ENCODE measurements at regions of chr20 and their contacts with region 1.

Region 1: DNA sequence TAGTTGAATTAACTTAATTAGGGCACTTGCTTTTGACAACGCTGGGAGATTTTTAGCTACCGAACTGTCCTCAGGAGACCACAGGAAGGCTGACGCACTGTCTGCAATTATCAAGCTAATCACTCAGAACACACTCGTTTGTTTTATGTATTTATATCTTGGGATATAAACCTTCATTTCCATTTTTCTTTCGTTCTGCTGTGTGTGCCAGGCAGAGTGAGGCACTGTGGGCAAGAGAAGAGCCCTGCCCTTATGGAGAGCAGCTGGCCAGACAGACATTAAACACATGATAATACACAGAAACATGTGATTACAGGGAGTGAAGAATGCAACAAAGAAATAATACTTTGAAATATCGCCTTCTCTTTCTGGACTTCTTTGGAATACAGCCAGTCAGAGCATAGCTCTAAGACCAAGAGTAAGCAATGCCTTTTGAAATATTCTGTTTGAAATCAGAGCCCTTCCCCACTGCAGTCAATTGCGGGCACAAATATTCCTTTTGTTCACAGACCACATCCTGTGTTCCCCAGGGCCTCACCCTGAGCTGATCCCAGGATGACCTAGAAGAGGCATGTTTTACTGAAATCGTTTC is 96.8 kb downstream of the ANKRD60 start:
- DNase-seq: peak; percentile 98
- ATAC-seq: peak; percentile 49
- H3K4me3 ChIP-seq: peak overlapping the region; percentile 43
- H3K27ac ChIP-seq: peak overlapping the region; percentile 74
- H3K4me1 ChIP-seq: peaks cover 65% of the 10 kb centered on the region
- H3K27me3 ChIP-seq: no peaks in the 10 kb centered on the region
- CTCF ChIP-seq: no peak

Region 2: DNA sequence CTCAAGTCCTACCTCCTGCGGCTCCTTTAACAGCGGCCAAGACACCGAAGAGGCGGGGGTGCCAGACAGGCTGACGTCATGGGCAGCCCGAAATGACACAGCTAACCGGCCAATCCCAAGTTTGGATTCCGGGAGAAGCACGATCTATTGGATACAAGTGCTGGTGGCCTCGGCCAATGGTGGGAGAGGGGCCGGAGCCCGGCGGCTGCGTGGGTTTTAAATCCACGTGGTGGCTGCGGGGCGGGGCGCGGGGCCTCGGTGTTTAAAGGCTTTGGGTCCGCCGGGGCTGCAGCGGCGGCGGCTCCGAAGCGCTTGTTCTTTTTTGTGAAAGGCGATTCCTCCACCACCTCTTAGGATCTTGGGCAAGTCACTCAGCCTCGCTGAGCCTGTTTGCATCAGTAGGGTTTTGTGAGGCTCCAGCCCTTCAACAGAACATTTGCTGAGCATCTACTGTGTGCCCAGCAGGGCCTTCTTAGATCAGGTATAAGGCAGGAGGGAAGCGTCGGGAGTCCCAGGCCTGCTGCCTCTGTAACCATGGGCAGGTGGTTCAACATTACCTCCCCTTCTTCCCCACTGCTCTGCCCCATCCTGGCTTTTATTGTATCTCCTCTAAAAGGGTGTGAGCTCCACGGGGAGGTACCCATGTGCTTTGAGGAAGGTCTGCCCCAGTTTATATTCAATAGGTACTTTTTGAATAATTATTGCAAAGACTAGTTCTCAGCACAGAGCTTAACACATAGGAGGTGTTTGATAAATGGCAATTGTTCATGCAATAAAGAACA is 413.0 kb before region 1 on chr20:
- CTCF ChIA-PET with region 1: no interaction called
- POLR2A ChIA-PET with region 1: interaction called, 13 read pairs
- intact Hi-C with region 1: no loop called
- DNase-seq: peak; percentile 100
- ATAC-seq: peak; percentile 88
- H3K4me3 ChIP-seq: peak overlapping the region; percentile 63
- H3K27ac ChIP-seq: peak overlapping the region; percentile 72
- H3K4me1 ChIP-seq: peaks cover 49% of the 10 kb centered on the region
- H3K27me3 ChIP-seq: no peaks in the 10 kb centered on the region
- CTCF ChIP-seq: no peak

Region 3: DNA sequence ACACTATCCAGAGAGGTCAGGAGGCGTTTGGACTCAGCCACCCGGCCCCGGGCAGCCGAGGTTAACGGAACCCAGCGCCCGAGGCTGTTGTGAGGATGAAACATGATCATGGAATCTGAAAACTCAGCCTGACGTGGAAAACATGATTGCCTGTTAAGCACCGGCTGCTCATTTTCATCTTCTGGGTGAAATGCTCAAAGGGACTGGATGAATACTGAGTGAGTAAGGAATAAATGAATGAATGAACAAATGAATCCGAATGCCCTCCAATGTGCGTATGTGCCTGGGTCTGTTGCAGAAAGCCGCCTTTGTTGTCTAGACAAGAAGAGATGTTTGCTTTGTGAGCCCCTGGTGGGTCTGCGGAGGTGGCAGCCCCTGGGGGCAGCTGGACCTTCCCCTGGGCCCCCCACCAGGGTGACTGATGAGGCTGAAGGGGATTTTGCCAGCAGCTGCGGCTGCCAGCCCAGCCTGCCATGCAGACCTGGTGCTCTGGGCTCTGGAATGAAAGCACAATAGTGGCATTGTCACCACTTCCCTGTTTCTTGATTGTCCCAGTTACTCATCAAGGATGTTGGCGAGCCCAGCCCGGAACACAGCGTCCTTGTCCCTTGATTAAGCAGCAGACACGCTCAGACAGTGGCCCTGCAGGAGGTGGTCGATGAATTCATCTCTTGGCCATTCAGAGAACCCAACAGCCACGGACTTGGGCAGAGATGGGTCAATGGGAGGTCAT is 114.2 kb before region 1 on chr20:
- CTCF ChIA-PET with region 1: no interaction called
- POLR2A ChIA-PET with region 1: no interaction called
- intact Hi-C with region 1: loop called (anchors 5 kb)
- DNase-seq: peak; percentile 98
- ATAC-seq: peak; percentile 88
- H3K4me3 ChIP-seq: peak overlapping the region; percentile 42; the same call in 1 of the 2 replicates
- H3K27ac ChIP-seq: peak overlapping the region; percentile 97
- H3K4me1 ChIP-seq: peaks cover 58% of the 10 kb centered on the region
- H3K27me3 ChIP-seq: no peaks in the 10 kb centered on the region
- CTCF ChIP-seq: no peak

Region 4: DNA sequence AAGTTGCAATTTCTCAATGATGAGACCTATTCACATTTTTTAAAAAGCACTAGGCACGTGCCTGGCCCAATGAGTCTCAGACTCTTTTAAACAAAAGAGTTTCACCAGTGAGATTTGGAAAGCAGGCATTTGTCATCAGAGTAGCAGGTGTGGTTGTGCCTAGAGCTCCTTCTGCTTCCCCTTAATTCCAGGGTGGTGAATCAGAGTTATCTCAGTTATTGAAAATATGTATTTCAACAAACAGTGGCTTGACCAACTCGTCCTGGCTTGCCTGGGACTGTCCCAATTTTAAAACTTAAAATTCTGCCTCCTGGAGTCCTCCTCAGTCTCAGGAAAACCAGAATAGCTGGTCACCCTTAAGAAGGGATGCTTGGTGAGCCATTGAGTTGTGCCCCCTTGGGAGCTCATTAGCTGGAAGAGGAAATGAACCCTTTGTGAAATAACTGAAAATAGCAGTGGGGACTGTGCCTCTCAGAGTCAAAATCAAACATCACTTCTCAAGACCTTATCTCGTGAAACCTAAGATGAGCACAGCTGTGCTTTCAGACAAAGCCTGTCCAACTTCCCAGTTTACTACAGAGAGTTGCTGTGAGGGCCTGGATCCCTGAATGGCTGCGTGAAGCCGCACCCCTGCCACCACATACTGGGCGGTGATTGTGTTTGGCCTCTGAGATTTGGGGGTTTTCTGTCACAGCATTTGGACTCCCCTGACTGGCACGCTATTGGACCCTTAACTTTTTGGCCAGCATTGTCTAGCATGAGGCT is 19.4 kb before region 1 on chr20:
- CTCF ChIA-PET with region 1: no interaction called
- POLR2A ChIA-PET with region 1: interaction called, 7 read pairs
- intact Hi-C with region 1: loop called (anchors 1 kb)
- DNase-seq: peak; percentile 98
- ATAC-seq: peak; percentile 94
- H3K4me3 ChIP-seq: no peak overlapping the region
- H3K27ac ChIP-seq: peak overlapping the region; percentile 55
- H3K4me1 ChIP-seq: peaks cover 44% of the 10 kb centered on the region
- H3K27me3 ChIP-seq: no peaks in the 10 kb centered on the region
- CTCF ChIP-seq: no peak

Region 5: GRCh38 chr20:58179432-58180099 is 47.9 kb after region 1 on chr20:
- CTCF ChIA-PET with region 1: no interaction called
- POLR2A ChIA-PET with region 1: no interaction called
- intact Hi-C with region 1: loop called (anchors 5 kb)
- DNase-seq: peak; percentile 77
- ATAC-seq: peak; percentile 93
- H3K4me3 ChIP-seq: peak overlapping the region; percentile 66
- H3K27ac ChIP-seq: peak overlapping the region; percentile 4; the same call in 1 of the 2 replicates
- H3K4me1 ChIP-seq: peaks cover 12% of the 10 kb centered on the region
- H3K27me3 ChIP-seq: no peaks in the 10 kb centered on the region
- CTCF ChIP-seq: peak; percentile 99

Region 6: GRCh38 chr20:58213121-58213520 is 81.5 kb after region 1 on chr20:
- CTCF ChIA-PET with region 1: no interaction called
- POLR2A ChIA-PET with region 1: no interaction called
- intact Hi-C with region 1: no loop called
- DNase-seq: peak; percentile 34
- ATAC-seq: peak; percentile 35; the same call in 1 of the 2 replicates
- H3K4me3 ChIP-seq: no peak overlapping the region
- H3K27ac ChIP-seq: no peak overlapping the region
- H3K4me1 ChIP-seq: peaks cover 6% of the 10 kb centered on the region; the same call in 1 of the 2 replicates
- H3K27me3 ChIP-seq: no peaks in the 10 kb centered on the region
- CTCF ChIP-seq: peak; percentile 51

Measured in PC-3 (cell line).